GM13976 (cell line): ENCODE measurements at regions of chr22 and their contacts with region 1.

Region 1: GRCh38 chr22:25488244-25489020 is 76.0 kb upstream of the GRK3 start:
- DNase-seq: no peak
- CTCF ChIP-seq: no peak

Region 2: GRCh38 chr22:25375683-25376082 is 112.7 kb before region 1 on chr22:
- in situ Hi-C with region 1: no loop called
- DNase-seq: no peak
- CTCF ChIP-seq: no peak

Region 3: DNA sequence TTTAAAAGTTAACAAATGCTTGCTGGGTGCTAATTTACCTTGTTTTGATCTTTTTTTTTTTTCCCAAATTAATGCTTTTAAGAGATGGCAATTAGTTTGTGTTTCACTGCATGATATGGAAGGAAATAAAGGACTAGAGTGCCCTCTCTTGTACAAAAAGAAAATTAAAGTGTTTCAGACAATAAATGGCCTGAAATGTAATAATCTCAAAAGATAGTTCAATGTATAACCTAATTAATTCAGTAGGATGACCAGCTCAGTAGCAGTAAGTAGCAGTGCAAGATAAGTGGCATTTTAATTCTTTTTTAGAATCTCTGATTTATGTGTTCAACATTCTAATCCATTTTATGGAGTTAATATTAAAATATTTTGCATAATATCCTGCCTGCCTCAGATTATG is 213.6 kb after region 1 on chr22:
- in situ Hi-C with region 1: loop called (anchors 10 kb)
- DNase-seq: peak; percentile 45
- CTCF ChIP-seq: peak; percentile 5

Region 4: DNA sequence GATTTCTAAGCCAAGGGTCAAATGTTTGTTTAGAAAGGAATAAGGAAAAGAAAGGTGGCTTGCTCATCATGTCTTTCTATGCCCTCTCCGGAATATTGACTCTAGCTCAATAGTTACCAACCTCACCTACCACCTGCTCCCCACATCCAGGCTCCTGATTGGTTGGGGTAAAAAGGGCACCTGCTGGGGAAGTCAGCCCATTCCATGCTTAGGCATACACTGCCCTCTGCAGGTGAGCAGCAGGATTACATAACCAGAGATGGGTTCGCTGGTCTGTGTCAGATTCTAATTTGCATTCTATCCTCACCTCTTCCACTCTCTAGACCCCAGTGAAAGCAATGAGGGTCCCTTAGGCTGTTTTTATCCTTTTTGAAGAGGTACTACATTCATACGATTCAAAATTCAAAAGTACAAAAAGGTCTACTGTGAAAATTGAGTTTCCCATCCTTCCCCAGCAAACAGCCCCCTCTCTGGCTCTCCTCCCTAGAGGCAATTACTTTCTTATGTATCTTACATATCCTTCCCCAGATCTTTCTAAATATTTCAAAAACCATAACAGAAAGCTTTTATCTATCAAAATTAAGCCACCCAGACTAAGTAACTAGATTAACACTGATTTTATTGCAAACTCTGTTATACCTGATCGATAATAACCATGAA is 842.7 kb after region 1 on chr22:
- in situ Hi-C with region 1: loop called (anchors 25 kb)
- DNase-seq: peak; percentile 75
- CTCF ChIP-seq: peak; percentile 80